ENCODE measurements at regions of chr5 and their contacts with region 1.

Region 1: DNA sequence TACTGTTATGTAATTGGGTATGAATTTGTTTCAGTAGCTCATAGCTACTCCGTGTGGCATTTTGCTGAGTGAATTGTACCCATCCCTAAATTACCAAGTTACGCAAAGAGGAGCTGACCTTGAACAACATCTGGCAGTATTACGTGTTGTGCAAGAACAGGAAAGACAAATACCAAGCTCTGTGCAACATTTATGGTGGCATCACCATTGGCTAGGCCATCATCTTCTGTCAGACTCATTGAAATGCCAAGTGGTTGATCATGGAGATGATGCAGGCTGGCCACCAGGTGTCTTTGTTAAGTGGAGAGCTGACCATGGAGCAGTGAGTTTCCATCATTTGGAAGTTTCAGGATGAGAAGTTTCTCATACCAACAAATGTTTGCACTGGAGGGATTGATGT is 15.0 kb downstream of the ZSWIM6 start:
- DNase-seq: no peak
- ATAC-seq: no peak
- H3K4me3 Mint-ChIP-seq: no peak overlapping the region
- H3K27ac Mint-ChIP-seq: no peak overlapping the region
- H3K4me1 Mint-ChIP-seq: peaks cover 20% of the 10 kb centered on the region
- H3K27me3 Mint-ChIP-seq: no peaks in the 10 kb centered on the region
- CTCF ChIP-seq: no peak

Region 2: DNA sequence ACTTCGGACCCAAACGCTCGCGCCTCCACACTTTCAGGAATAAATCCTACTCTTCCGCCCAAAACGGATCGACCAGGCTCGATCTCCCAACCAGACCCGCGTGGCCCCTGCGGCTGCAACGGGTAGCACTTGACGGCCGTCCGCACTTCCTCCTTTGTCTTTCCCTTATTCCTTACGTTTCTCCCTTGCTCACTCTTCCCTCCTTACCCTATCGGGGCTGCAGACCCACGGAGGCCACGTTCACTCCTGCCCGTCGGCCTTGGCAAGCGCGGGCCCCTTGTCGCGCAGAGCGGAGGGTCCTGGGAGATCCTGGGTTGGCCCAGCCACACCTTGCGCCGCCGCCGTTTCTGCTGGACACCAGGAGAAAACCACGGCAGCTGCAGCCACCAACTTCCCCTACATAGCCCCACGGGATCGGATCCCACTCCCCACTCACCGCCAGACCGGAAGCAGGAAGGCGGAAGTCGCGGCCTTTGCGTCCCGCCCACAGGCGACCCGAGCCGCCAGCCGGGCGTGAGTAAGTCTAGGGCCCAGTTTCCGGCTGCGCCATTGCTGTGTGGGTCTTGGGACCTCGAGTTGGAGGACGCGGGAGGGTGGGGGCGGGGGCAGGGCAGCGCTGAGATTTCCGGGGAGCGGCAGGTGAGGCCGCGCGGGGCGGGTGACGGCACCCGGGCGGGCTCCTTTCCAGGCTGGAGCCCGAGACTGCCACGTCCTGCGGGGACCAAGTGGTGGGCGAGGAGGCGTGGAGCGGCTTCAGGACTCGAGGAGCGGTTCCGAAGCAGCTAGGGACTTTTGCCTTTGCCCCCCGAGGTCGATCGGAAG is 184.9 kb before region 1 on chr5 and contains the start of gene SMIM15:
- CTCF ChIA-PET with region 1: no interaction called
- POLR2A ChIA-PET with region 1: no interaction called
- intact Hi-C with region 1: no loop called
- DNase-seq: peak; percentile 91
- ATAC-seq: peak; percentile 94
- H3K4me3 Mint-ChIP-seq: peak within 1 kb of the TSS; percentile 95
- H3K27ac Mint-ChIP-seq: peak within 1 kb of the TSS; percentile 96
- H3K4me1 Mint-ChIP-seq: peaks cover 34% of the 10 kb centered on the region
- H3K27me3 Mint-ChIP-seq: no peaks in the 10 kb centered on the region
- CTCF ChIP-seq: no peak
- total RNA-seq, gene SMIM15: 58.9 to 64.3 TPM

Region 3: DNA sequence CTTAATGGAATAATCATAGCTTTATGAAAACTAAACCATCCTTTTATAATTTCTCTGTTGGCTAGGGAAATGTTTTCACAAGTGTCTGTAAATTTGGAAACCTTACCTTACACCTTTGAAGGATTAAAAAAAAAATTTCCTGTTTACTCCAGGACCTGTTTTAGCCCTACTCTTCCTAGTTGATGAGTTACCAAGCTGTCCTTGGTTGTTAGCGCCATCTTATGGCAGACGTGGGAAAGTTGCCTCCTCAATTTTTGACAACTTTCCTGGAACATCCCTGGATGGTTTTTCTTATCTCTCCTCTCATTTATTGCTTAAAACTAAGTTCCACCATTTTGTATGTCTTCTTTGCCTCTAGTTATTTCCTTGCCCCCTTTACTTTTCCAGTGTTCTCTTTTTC is 10.7 kb after region 1 on chr5:
- CTCF ChIA-PET with region 1: interaction called, 13 read pairs
- POLR2A ChIA-PET with region 1: no interaction called
- intact Hi-C with region 1: no loop called
- DNase-seq: peak; percentile 21
- ATAC-seq: no peak
- H3K4me3 Mint-ChIP-seq: no peak overlapping the region
- H3K27ac Mint-ChIP-seq: no peak overlapping the region
- H3K4me1 Mint-ChIP-seq: peaks cover 29% of the 10 kb centered on the region
- H3K27me3 Mint-ChIP-seq: no peaks in the 10 kb centered on the region
- CTCF ChIP-seq: peak; percentile 66